ENCODE measurements at regions of chr13 and their contacts with region 1.

Region 1: GRCh38 chr13:50130123-50130946 is 115.1 kb downstream of the KCNRG start:
- DNase-seq: peak in 8 of 14 experiments; percentile 18 to 69 (median 38)
- ATAC-seq: peak; percentile 2
- H3K4me3 ChIP-seq: peak overlapping the region; percentile 53
- H3K4me3 Mint-ChIP-seq: peak overlapping the region; percentile 91
- H3K27ac ChIP-seq: peak overlapping the region in 1 of 2 donors; percentile 13
- H3K27ac Mint-ChIP-seq: peak overlapping the region; percentile 94
- H3K4me1 ChIP-seq: peaks cover 71% of the 10 kb centered on the region
- H3K4me1 Mint-ChIP-seq: peaks cover 59% of the 10 kb centered on the region
- H3K27me3 ChIP-seq: peaks cover 62 to 64% of the 10 kb centered on the region in 2 experiments
- H3K27me3 Mint-ChIP-seq: peaks cover 84% of the 10 kb centered on the region
- CTCF ChIP-seq: no peak

Region 2: DNA sequence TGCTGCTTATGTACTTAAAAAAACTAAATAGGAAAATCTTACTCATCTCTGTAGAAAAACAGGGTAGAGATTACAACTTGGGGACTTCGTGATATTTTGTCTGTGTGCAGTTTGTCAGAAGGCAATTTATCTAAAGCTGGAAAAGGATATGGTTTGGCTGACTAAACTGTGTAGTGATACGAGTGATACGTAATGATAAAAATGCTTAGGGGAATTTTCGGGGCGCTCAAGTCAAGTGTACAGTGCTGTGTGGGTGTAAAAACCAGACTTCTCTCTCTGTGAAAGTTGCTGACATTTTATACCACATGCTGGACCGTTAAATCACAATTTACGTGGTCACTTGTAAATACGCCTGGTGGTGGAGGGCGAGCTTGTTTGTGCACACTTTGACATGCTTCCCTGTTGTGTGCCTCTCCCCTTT is 106.6 kb after region 1 on chr13:
- CTCF ChIA-PET with region 1: no interaction called
- POLR2A ChIA-PET with region 1: interaction called, 52 read pairs
- intact Hi-C with region 1: loop called in 1 of 2 experiments (anchors 5 kb)
- DNase-seq: peak in 6 of 14 experiments; percentile 5 to 79 (median 56)
- ATAC-seq: peak; percentile 91
- H3K4me3 ChIP-seq: peak overlapping the region; percentile 47
- H3K4me3 Mint-ChIP-seq: peak overlapping the region; percentile 78
- H3K27ac ChIP-seq: peak overlapping the region in 1 of 2 donors; percentile 56
- H3K27ac Mint-ChIP-seq: peak overlapping the region; percentile 67
- H3K4me1 ChIP-seq: peaks cover 11% of the 10 kb centered on the region
- H3K4me1 Mint-ChIP-seq: peaks cover 32% of the 10 kb centered on the region
- H3K27me3 ChIP-seq: no peaks in the 10 kb centered on the region
- H3K27me3 Mint-ChIP-seq: no peaks in the 10 kb centered on the region
- CTCF ChIP-seq: no peak

Region 3: GRCh38 chr13:50284540-50284939 is 154.2 kb after region 1 on chr13:
- CTCF ChIA-PET with region 1: no interaction called
- POLR2A ChIA-PET with region 1: no interaction called
- intact Hi-C with region 1: no loop called
- DNase-seq: peak in 1 of 14 experiments; percentile 16
- ATAC-seq: no peak
- H3K4me3 ChIP-seq: no peak overlapping the region
- H3K4me3 Mint-ChIP-seq: no peak overlapping the region
- H3K27ac ChIP-seq: no peak overlapping the region
- H3K27ac Mint-ChIP-seq: no peak overlapping the region
- H3K4me1 ChIP-seq: no peaks in the 10 kb centered on the region
- H3K4me1 Mint-ChIP-seq: peaks cover 8% of the 10 kb centered on the region
- H3K27me3 ChIP-seq: no peaks in the 10 kb centered on the region
- H3K27me3 Mint-ChIP-seq: no peaks in the 10 kb centered on the region
- CTCF ChIP-seq: no peak

Region 4: DNA sequence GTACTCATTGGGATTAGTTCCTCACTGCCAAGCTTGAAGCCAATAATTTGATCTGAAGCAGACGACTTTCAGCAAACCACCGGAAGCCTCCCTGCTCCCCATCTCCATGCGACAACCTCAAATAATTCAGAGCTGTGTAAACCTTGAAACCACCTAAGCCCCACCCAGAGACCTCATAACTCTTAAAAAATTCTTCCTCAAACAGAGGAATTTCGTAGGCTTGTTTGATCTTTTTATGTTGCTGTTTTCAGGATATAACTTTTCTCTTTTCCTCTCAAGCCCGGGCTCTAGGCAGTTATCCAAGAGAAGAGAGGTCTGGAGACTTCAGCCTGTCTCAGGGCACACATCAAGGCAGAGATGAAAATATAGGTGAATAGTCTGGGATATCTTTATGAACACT is 196.5 kb after region 1 on chr13:
- CTCF ChIA-PET with region 1: no interaction called
- POLR2A ChIA-PET with region 1: no interaction called
- intact Hi-C with region 1: no loop called
- DNase-seq: no peak
- ATAC-seq: no peak
- H3K4me3 ChIP-seq: no peak overlapping the region
- H3K4me3 Mint-ChIP-seq: no peak overlapping the region
- H3K27ac ChIP-seq: no peak overlapping the region
- H3K27ac Mint-ChIP-seq: no peak overlapping the region
- H3K4me1 ChIP-seq: no peaks in the 10 kb centered on the region
- H3K4me1 Mint-ChIP-seq: no peaks in the 10 kb centered on the region
- H3K27me3 ChIP-seq: no peaks in the 10 kb centered on the region
- H3K27me3 Mint-ChIP-seq: no peaks in the 10 kb centered on the region
- CTCF ChIP-seq: no peak

Region 5: DNA sequence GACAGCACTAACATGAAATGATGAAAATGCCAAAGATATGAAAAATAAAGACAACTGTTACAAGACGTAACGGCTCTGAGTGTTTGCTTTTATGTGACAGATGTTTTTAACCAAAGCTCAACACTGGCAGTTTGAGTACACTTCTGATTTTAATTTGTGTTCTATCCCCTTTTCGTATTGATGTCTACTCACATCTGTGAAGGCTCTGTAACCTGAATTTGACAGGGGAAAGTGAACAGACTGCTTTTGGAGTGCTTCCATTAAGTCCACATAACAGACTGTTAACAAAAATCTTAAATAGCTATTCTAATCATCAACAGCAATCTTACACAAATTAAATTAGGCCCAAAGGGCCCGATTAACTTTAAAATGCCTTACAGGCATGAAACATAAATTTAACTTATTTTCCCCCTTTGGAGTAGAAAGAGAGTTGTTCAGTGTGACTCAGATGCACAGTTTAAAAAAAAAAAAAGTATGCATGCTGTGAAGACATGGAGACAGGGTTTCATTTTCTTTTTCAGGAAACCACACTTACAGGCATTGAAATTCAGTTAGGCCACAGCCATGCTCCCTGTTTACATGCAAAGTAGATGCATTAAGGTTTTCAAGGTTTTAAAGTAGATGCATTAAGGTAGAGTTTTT is 763.0 kb after region 1 on chr13:
- CTCF ChIA-PET with region 1: no interaction called
- POLR2A ChIA-PET with region 1: interaction called, 53 read pairs
- intact Hi-C with region 1: loop called in 1 of 2 experiments (anchors 5 kb)
- DNase-seq: peak in 5 of 14 experiments; percentile 22 to 83 (median 71)
- ATAC-seq: peak; percentile 92
- H3K4me3 ChIP-seq: peak overlapping the region; percentile 28
- H3K4me3 Mint-ChIP-seq: peak overlapping the region; percentile 83
- H3K27ac ChIP-seq: peak overlapping the region; percentile 66 to 81
- H3K27ac Mint-ChIP-seq: peak overlapping the region; percentile 84
- H3K4me1 ChIP-seq: peaks cover 19% of the 10 kb centered on the region
- H3K4me1 Mint-ChIP-seq: peaks cover 43% of the 10 kb centered on the region
- H3K27me3 ChIP-seq: no peaks in the 10 kb centered on the region
- H3K27me3 Mint-ChIP-seq: no peaks in the 10 kb centered on the region
- CTCF ChIP-seq: no peak

Measured in CD4-positive, alpha-beta T cell (primary cell).